PC-9 (cell line): ENCODE measurements at regions of chr12 and their contacts with region 1.

Region 1: DNA sequence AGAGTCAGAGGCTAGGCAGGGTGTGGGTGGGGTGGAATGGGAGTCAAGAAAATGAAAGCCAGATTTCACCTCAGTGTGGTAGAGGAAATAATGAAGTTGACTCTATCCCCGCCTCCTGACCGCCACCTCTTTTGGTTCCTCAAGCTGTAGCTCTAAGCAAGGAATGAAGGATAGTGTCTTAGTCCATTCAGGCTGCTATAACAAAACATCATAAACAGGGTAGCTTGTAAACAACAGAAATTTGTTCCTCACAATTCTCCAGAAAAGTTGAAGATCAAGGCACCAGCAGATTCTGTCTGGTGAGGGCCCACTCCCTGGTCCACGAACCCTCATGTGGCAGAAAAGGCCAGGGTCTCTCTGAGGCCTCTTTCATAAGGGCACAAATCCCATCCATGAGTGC is 109.1 kb upstream of the AMN1 start:
- DNase-seq: no peak
- H3K4me3 ChIP-seq: no peak overlapping the region
- H3K27ac ChIP-seq: no peak overlapping the region
- H3K4me1 ChIP-seq: no peaks in the 10 kb centered on the region
- H3K27me3 ChIP-seq: no peaks in the 10 kb centered on the region
- CTCF ChIP-seq: no peak

Region 2: GRCh38 chr12:30930238-30930637 is 907.7 kb before region 1 on chr12:
- CTCF ChIA-PET with region 1: no interaction called
- POLR2A ChIA-PET with region 1: no interaction called
- intact Hi-C with region 1: no loop called
- DNase-seq: no peak
- H3K4me3 ChIP-seq: no peak overlapping the region
- H3K27ac ChIP-seq: no peak overlapping the region
- H3K4me1 ChIP-seq: 0 out of 2 replicates have a peak, but pooled peaks cover 5% of the 10 kb centered on the region
- H3K27me3 ChIP-seq: peaks cover 17% of the 10 kb centered on the region
- CTCF ChIP-seq: no peak

Region 3: DNA sequence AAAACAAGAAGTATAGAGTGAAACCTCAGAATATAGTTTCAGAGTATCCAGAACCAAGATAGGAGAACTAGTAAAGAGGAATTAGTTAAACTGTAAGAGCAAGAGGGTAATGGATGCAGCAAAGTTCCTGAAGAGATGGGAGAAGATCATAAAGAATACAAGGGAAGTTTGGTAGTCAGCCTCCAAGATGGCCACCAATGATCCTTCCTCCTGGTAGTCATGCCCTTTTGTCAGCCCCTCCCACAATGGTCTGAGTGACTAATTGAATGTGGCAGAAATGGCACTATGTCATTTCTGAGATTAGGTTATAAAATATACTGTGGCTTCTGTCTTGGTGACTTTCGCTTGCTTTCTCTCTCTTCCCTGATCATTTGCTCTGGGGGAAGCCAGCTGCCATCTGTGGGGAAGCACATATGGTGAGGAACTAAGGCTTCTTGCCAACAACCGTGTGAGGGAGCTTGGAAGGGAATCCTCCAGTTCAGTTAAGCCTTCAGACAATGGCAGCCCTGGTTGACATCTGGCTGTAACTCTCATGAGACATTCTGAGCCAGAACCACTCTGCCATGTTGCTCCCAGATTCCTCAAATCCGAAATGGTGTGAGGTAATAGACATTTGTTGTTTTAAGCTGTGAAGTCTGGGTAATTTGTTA is 53.8 kb before region 1 on chr12:
- CTCF ChIA-PET with region 1: interaction called, 14 read pairs
- POLR2A ChIA-PET with region 1: no interaction called
- intact Hi-C with region 1: no loop called
- DNase-seq: no peak
- H3K4me3 ChIP-seq: no peak overlapping the region
- H3K27ac ChIP-seq: no peak overlapping the region
- H3K4me1 ChIP-seq: no peaks in the 10 kb centered on the region
- H3K27me3 ChIP-seq: no peaks in the 10 kb centered on the region
- CTCF ChIP-seq: no peak

Region 4: GRCh38 chr12:31859232-31859977 is 21.5 kb after region 1 on chr12:
- CTCF ChIA-PET with region 1: no interaction called
- POLR2A ChIA-PET with region 1: no interaction called
- intact Hi-C with region 1: no loop called
- DNase-seq: no peak
- H3K4me3 ChIP-seq: no peak overlapping the region
- H3K27ac ChIP-seq: no peak overlapping the region
- H3K4me1 ChIP-seq: no peaks in the 10 kb centered on the region
- H3K27me3 ChIP-seq: no peaks in the 10 kb centered on the region
- CTCF ChIP-seq: no peak